WTC11 (cell line): ENCODE measurements at regions of chr14 and their contacts with region 1.

Region 1: DNA sequence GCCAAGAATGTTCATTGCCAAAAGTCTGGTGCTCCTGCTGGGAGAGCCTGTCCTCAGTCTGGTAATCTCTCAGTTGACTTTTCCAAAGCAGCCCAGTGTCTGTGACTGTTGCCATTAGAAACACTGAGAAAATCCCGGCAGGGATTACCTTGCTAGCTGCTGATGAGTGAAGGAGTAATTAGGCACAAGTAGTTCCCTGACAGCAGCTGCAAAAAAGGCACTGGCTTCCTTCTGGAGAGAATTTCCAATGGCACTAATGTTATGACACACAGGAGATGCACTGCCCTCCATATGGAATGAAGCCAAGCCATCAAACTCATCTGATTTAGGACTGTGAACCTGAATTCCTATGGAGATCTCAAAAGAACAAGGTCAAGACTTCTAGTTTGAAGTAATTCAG is 1321.2 kb upstream of the SEL1L start:
- DNase-seq: no peak
- ATAC-seq: no peak; the same call in none of the 2 replicates
- H3K4me3 Mint-ChIP-seq: no peak overlapping the region
- H3K27ac Mint-ChIP-seq: no peak overlapping the region
- H3K4me1 Mint-ChIP-seq: peaks cover 9% of the 10 kb centered on the region; the same call in 1 of the 2 replicates
- H3K27me3 Mint-ChIP-seq: no peaks in the 10 kb centered on the region
- CTCF ChIP-seq: no peak

Region 2: DNA sequence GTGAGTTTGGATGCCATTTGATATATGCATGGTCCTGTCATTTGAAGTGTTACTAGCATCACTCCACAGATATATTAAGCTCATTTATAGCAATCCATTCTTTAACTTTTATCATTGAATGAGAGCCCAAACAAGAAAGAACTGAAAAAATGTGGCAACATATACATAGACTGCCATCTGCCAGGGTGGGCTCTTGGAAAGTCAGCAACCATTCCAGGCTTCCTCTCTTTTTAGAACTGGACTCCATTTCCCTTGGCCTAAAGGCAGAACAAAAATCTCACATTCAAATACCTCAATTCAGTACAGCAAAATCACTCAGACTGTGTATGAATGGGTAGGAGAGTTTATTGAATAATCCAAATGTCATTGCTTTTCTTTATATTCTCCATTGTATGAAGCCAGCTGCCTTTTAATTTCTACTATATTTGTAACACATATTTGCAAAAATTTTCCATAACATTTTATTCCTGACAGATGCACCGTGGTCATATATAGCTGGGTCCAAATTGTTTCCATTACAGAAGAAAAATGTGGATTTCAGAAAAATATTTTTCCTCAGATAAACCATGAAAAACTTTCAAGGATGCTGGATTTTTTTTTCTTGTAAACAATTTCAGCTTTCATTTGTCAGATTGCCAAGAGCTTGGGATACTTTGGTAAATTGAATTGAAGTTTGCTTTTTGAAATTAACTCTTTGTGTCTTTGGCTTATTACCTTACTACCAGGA is 69.0 kb before region 1 on chr14:
- CTCF ChIA-PET with region 1: no interaction called
- POLR2A ChIA-PET with region 1: no interaction called
- DNase-seq: no peak
- ATAC-seq: no peak
- H3K4me3 Mint-ChIP-seq: no peak overlapping the region
- H3K27ac Mint-ChIP-seq: no peak overlapping the region
- H3K4me1 Mint-ChIP-seq: no peaks in the 10 kb centered on the region
- H3K27me3 Mint-ChIP-seq: no peaks in the 10 kb centered on the region
- CTCF ChIP-seq: no peak

Region 3: GRCh38 chr14:82830596-82830995 is 24.3 kb before region 1 on chr14:
- CTCF ChIA-PET with region 1: no interaction called
- POLR2A ChIA-PET with region 1: no interaction called
- DNase-seq: no peak
- ATAC-seq: no peak
- H3K4me3 Mint-ChIP-seq: no peak overlapping the region
- H3K27ac Mint-ChIP-seq: no peak overlapping the region
- H3K4me1 Mint-ChIP-seq: peaks cover 5% of the 10 kb centered on the region
- H3K27me3 Mint-ChIP-seq: no peaks in the 10 kb centered on the region
- CTCF ChIP-seq: no peak

Region 4: DNA sequence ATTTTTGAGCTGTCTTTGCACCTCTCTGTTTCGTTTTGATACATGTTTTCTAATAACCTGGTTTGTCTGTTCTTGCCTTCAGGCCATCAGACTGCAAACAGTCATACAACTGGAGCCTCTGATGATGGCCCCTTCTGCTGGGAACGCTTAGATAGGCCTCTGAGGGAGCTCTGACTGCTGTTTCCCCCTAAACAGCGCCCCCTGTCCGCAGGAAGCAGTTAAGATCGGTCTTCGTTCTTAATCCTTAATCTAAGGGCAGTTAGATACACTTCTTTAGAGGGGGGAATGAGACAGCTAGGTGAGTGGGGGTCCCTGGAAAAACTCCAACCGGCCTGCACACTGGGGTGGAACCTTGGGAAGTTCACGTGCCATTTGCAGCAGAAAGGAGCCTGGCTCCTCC is 17.6 kb after region 1 on chr14:
- CTCF ChIA-PET with region 1: interaction called, 12 read pairs
- POLR2A ChIA-PET with region 1: no interaction called
- DNase-seq: peak; percentile 76
- ATAC-seq: peak; percentile 94
- H3K4me3 Mint-ChIP-seq: no peak overlapping the region
- H3K27ac Mint-ChIP-seq: no peak overlapping the region
- H3K4me1 Mint-ChIP-seq: no peaks in the 10 kb centered on the region
- H3K27me3 Mint-ChIP-seq: no peaks in the 10 kb centered on the region
- CTCF ChIP-seq: peak; percentile 78

Region 5: DNA sequence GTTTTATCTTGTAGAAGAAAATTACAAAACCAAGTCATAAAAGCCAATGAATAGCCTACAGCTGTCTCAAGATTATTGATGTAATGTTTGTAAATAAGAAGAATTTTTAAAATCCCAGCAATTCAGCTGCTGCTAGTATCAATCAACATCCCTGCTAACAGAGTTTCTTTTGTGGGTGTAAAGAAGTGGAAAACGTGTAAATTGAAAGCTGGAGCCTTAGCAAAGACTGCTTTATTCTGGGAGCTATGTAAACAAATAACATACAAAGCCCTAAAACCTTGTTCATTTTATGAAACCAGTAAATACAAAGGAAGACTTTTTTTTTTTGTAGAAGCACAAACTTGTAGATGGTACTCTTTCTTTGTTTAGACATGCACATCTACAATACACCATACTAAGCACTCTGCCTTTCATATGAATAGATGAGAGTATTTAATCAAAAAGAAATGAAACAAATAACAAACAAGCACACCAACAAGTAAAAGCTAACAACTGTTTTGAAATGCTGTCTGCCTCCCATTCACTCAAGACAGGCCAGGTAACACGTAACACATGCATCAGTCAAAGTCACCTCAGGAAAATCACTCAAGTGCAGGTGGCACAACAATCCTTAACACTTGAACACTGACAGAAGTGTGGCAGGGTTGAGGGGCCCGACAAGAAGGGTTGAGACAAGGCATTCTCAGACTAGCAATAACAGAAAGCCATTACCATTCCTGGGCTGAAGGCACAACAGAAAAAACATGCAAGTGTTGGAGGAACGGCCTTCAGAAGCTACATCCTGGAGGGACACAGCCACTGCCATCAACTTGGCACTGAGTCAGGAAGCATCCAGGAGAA is 42.8 kb after region 1 on chr14:
- CTCF ChIA-PET with region 1: no interaction called
- POLR2A ChIA-PET with region 1: no interaction called
- DNase-seq: no peak
- ATAC-seq: no peak
- H3K4me3 Mint-ChIP-seq: no peak overlapping the region
- H3K27ac Mint-ChIP-seq: no peak overlapping the region
- H3K4me1 Mint-ChIP-seq: peaks cover 6% of the 10 kb centered on the region; the same call in 1 of the 2 replicates
- H3K27me3 Mint-ChIP-seq: no peaks in the 10 kb centered on the region
- CTCF ChIP-seq: no peak